Right ventricle myocardium inferior (tissue), 1 donor: ENCODE measurements at regions of chr1 and their contacts with region 1.

Region 1: DNA sequence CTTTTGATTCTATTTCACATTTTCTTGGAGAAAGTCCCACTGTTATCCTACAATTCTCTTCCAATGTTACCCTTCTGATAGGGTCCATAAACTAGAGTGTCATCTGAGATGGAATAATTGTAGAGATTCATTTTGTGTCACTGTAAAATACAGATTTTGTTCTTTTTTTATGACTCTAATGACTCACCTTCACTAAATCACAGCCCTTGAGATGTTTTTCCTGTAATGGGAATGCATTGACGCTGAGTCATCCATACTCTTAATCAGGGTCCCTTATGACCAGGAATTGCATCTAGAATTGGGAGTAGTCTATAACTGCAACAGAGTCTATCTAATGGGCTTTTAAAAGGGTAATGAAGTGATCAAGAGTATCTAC is 315.5 kb downstream of the TGFB2 start:
- DNase-seq: no peak
- ATAC-seq: no peak

Region 2: GRCh38 chr1:218633238-218633988 is 27.3 kb before region 1 on chr1:
- intact Hi-C with region 1: no loop called
- DNase-seq: no peak
- ATAC-seq: peak; percentile 83

Region 3: DNA sequence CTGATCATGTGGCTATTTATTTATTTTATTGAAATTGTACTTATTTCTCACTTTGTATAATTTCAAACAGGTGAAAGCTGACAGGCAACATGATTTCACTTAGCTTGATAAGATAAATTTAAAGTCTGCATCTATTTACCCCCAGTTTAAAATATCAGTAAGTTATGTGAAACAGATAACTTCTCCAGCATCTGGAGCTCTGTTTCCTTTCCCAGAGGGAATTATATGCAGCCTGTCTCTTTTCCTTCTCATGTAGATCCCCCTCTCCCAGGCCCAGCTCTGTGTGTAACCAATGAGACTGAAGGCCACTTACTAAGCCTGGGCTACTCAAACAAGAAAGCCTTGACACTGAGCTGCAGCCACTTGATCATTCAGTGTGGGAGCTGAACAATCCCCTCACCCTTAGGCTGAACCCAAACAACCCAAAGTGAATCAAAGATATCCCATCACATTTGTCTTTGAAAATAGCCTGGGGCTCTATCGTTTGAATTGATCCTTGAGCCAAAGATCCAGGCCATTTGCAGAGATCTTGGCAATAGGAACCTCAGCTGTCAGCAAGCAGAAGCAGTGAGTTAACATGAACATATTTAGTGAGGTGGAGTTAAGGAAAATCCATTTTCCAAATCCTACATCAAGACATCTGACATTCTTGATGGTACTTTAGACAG is 68.4 kb after region 1 on chr1:
- intact Hi-C with region 1: loop called (anchors 5 kb)
- DNase-seq: no peak
- ATAC-seq: no peak